AG04450 (cell line): ENCODE measurements at regions of chr19 and their contacts with region 1.

Region 1: GRCh38 chr19:43643326-43643725 is 3.7 kb upstream of the CADM4 start:
- DNase-seq: no peak
- H3K4me3 ChIP-seq: no peak overlapping the region
- H3K27ac ChIP-seq: no peak overlapping the region
- H3K27me3 ChIP-seq: peaks cover 18% of the 10 kb centered on the region
- CTCF ChIP-seq: no peak

Region 2: GRCh38 chr19:43596842-43597461 is 46.4 kb before region 1 on chr19:
- CTCF ChIA-PET with region 1: no interaction called
- POLR2A ChIA-PET with region 1: no interaction called
- DNase-seq: no peak
- H3K4me3 ChIP-seq: peak overlapping the region; percentile 72
- H3K27ac ChIP-seq: peak overlapping the region; percentile 99
- H3K27me3 ChIP-seq: no peaks in the 10 kb centered on the region
- CTCF ChIP-seq: no peak

Region 3: GRCh38 chr19:43619262-43620060 is 23.9 kb before region 1 on chr19 and contains the start of gene ZNF428:
- CTCF ChIA-PET with region 1: no interaction called
- POLR2A ChIA-PET with region 1: interaction called, 12 read pairs
- DNase-seq: peak; percentile 58
- H3K4me3 ChIP-seq: peak within 1 kb of the TSS; percentile 91
- H3K27ac ChIP-seq: peak within 1 kb of the TSS; percentile 88
- H3K27me3 ChIP-seq: no peaks in the 10 kb centered on the region
- CTCF ChIP-seq: no peak
- polyA plus RNA-seq, gene ZNF428: 18.7 and 23.2 TPM in 2 replicates

Region 4: GRCh38 chr19:43675269-43675879 is 32.0 kb after region 1 on chr19:
- CTCF ChIA-PET with region 1: no interaction called
- POLR2A ChIA-PET with region 1: no interaction called
- DNase-seq: no peak
- H3K4me3 ChIP-seq: no peak overlapping the region
- H3K27ac ChIP-seq: no peak overlapping the region
- H3K27me3 ChIP-seq: no peaks in the 10 kb centered on the region
- CTCF ChIP-seq: no peak

Region 5: GRCh38 chr19:43774103-43774939 is 131.0 kb after region 1 on chr19:
- CTCF ChIA-PET with region 1: no interaction called
- POLR2A ChIA-PET with region 1: no interaction called
- DNase-seq: no peak
- H3K4me3 ChIP-seq: peak overlapping the region; percentile 25
- H3K27ac ChIP-seq: no peak overlapping the region
- H3K27me3 ChIP-seq: peaks cover 13% of the 10 kb centered on the region
- CTCF ChIP-seq: peak; percentile 50